Vagina (tissue), 2 donors: ENCODE measurements at regions of chr12 and their contacts with region 1.

Region 1: GRCh38 chr12:108457006-108457733 is 57.9 kb upstream of the FICD start:
- DNase-seq: no peak
- H3K4me3 ChIP-seq: no peak overlapping the region
- H3K27ac ChIP-seq: no peak overlapping the region
- H3K4me1 ChIP-seq: no peaks in the 10 kb centered on the region
- H3K27me3 ChIP-seq: no peaks in the 10 kb centered on the region
- CTCF ChIP-seq: peak; percentile 8 to 53 (median 25)
- POLR2A ChIP-seq: no peak

Region 2: DNA sequence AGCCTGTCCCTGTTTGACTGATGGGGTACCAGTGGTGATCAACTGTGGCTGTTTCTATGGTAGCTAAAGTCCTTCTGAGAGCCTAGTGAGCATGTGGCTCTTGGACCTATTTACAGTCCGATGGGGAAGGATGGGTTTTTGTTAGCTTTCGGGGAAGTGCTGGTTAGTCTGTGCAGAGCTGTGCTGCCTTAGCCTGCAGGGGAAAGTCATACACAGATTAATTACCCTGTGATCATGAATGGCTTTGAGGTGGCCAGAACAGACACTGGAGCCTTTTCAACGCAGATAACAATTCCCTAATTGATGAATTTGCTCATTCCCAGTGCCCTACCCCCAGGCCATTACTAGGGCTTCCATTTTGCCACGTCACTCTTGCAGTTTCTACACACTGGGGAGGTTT is 228.4 kb before region 1 on chr12:
- intact Hi-C with region 1: loop called (anchors 10 kb)
- DNase-seq: no peak
- H3K4me3 ChIP-seq: no peak overlapping the region
- H3K27ac ChIP-seq: no peak overlapping the region
- H3K4me1 ChIP-seq: no peaks in the 10 kb centered on the region
- H3K27me3 ChIP-seq: no peaks in the 10 kb centered on the region
- CTCF ChIP-seq: no peak
- POLR2A ChIP-seq: no peak